ENCODE measurements at regions of chr4 and their contacts with region 1.

Region 1: GRCh38 chr4:173370477-173371291 is at the start of gene SAP30:
- DNase-seq: peak; percentile 89
- ATAC-seq: peak; percentile 86
- H3K4me3 ChIP-seq: peak within 1 kb of the TSS; percentile 99
- H3K27ac ChIP-seq: peak within 1 kb of the TSS; percentile 84
- H3K4me1 ChIP-seq: peaks cover 8% of the 10 kb centered on the region
- H3K27me3 ChIP-seq: no peaks in the 10 kb centered on the region
- CTCF ChIP-seq: no peak
- EP300 ChIP-seq: no peak
- POLR2A ChIP-seq: peak; percentile 97
- RAD21 ChIP-seq: no peak
- polyA plus RNA-seq, gene SAP30: 5.4 to 24.0 TPM

Region 2: GRCh38 chr4:173334085-173334772 is 36.5 kb before region 1 on chr4 and contains the start of gene HMGB2:
- CTCF ChIA-PET with region 1: interaction called, 21 read pairs
- POLR2A ChIA-PET with region 1: interaction called, 472 read pairs
- RAD21 ChIA-PET with region 1: interaction called, 145 read pairs
- SMC1A ChIA-PET with region 1: interaction called, 232 read pairs
- in situ Hi-C with region 1: loop called (anchors 5 kb)
- intact Hi-C with region 1: loop called (anchors 1 kb)
- DNase-seq: peak; percentile 99
- ATAC-seq: peak; percentile 92
- H3K4me3 ChIP-seq: peak within 1 kb of the TSS; percentile 94
- H3K27ac ChIP-seq: peak within 1 kb of the TSS; percentile 100
- H3K4me1 ChIP-seq: peaks cover 6% of the 10 kb centered on the region
- H3K27me3 ChIP-seq: no peaks in the 10 kb centered on the region
- CTCF ChIP-seq: no peak
- EP300 ChIP-seq: no peak; a peak in 1 of 4 replicates
- POLR2A ChIP-seq: peak; percentile 98
- RAD21 ChIP-seq: no peak
- polyA plus RNA-seq, gene HMGB2: 858 to 954 TPM

Region 3: GRCh38 chr4:173642509-173642908 is 271.8 kb after region 1 on chr4:
- CTCF ChIA-PET with region 1: no interaction called
- POLR2A ChIA-PET with region 1: no interaction called
- RAD21 ChIA-PET with region 1: no interaction called
- SMC1A ChIA-PET with region 1: no interaction called
- in situ Hi-C with region 1: no loop called
- intact Hi-C with region 1: no loop called
- DNase-seq: no peak
- ATAC-seq: no peak
- H3K4me3 ChIP-seq: no peak overlapping the region
- H3K27ac ChIP-seq: no peak overlapping the region
- H3K4me1 ChIP-seq: no peaks in the 10 kb centered on the region
- H3K27me3 ChIP-seq: no peaks in the 10 kb centered on the region
- CTCF ChIP-seq: no peak
- EP300 ChIP-seq: no peak
- POLR2A ChIP-seq: no peak
- RAD21 ChIP-seq: no peak

Measured in GM12878 (cell line).